ENCODE measurements at regions of chr5 and their contacts with region 1.

Region 1: GRCh38 chr5:147935032-147935431 is 28.7 kb upstream of the C5orf46 start:
- DNase-seq: no peak
- ATAC-seq: peak in 6 of 8 donors; percentile 55 to 75 (median 66)
- H3K4me3 ChIP-seq: no peak overlapping the region
- H3K27ac ChIP-seq: no peak overlapping the region
- H3K4me1 ChIP-seq: peaks cover 0 to 5% (median 0%) of the 10 kb centered on the region in 9 donors
- H3K27me3 ChIP-seq: no peaks in the 10 kb centered on the region
- CTCF ChIP-seq: peak in 8 of 9 donors; percentile 23 to 67 (median 50)

Region 2: DNA sequence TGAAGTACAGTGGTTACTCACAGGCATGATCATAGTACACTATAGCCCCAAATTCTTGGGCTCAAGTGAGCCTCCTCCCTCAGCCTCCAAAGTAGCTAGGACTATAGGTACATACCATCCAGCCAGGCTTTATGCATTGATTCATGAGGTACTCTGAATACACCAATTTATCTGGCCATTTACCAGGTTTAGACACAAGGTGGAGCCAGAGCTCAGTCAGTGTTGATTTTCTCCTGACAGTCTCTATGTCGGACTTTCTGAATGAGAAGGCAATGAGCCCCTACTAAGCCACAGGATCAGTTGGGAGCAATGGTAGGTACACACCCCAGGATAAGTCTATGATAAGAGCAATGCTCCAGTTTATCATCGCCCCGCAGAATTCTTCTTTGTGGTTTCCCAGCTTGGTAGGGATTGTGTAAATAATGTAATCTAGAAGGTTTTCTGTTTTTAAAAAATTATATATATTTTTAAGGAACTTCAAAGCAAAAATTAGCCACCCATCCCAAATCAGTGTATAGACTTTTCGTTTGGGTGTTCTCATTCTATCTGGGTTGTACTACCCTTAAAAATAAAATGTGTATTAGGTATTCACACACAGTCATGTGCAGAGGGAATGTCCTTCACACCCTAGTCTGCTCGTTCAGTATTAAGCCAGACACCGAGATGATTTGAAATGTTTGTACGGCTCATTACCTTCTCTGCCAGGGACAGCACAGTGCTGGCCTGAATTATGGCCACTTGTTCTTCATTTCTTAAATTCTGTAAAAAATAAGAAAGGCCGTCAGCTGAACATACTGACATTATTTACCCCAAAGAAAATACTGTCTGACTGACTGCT is 306.8 kb before region 1 on chr5:
- intact Hi-C with region 1: loop called in 2 of 10 experiments (anchors 10 kb)
- DNase-seq: peak in 1 of 2 donors; percentile 62
- ATAC-seq: peak; percentile 47 to 87 (median 63)
- H3K4me3 ChIP-seq: no peak overlapping the region
- H3K27ac ChIP-seq: no peak overlapping the region
- H3K4me1 ChIP-seq: no peaks in the 10 kb centered on the region
- H3K27me3 ChIP-seq: peaks cover 0 to 14% (median 0%) of the 10 kb centered on the region in 7 donors
- CTCF ChIP-seq: peak; percentile 50 to 82 (median 74)

Region 3: DNA sequence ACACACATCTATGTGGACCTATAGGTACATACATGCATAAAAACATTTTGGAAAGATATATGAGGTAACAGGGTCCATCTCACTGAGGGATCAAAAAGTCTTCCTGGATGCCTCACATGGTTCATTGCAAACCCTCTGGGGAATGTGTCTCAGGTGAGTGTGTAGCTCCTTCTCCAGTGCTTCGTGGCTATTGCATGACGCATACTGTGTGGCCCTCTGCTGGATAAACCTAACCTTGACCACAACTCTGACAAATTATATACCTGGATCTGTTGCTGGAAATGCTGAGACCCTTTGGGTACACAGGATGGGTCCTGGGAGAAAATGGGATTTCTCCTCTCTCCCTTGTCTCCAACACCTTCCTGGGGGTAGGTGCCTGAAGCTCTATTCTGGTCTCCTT is 244.4 kb before region 1 on chr5:
- intact Hi-C with region 1: no loop called
- DNase-seq: no peak
- ATAC-seq: no peak
- H3K4me3 ChIP-seq: no peak overlapping the region
- H3K27ac ChIP-seq: no peak overlapping the region
- H3K4me1 ChIP-seq: peaks cover 0 to 5% (median 0%) of the 10 kb centered on the region in 9 donors
- H3K27me3 ChIP-seq: peaks cover 0 to 4% (median 0%) of the 10 kb centered on the region in 7 donors
- CTCF ChIP-seq: peak in 3 of 9 donors; percentile 8 to 10 (median 10)

Region 4: GRCh38 chr5:147857302-147858129 is 77.5 kb before region 1 on chr5:
- intact Hi-C with region 1: loop called in 8 of 10 experiments (anchors 1 to 5 kb)
- DNase-seq: peak in 1 of 2 donors; percentile 42
- ATAC-seq: peak in 3 of 8 donors; percentile 46 to 51 (median 46)
- H3K4me3 ChIP-seq: no peak overlapping the region
- H3K27ac ChIP-seq: no peak overlapping the region
- H3K4me1 ChIP-seq: no peaks in the 10 kb centered on the region
- H3K27me3 ChIP-seq: no peaks in the 10 kb centered on the region
- CTCF ChIP-seq: peak; percentile 67 to 90 (median 82)

Region 5: DNA sequence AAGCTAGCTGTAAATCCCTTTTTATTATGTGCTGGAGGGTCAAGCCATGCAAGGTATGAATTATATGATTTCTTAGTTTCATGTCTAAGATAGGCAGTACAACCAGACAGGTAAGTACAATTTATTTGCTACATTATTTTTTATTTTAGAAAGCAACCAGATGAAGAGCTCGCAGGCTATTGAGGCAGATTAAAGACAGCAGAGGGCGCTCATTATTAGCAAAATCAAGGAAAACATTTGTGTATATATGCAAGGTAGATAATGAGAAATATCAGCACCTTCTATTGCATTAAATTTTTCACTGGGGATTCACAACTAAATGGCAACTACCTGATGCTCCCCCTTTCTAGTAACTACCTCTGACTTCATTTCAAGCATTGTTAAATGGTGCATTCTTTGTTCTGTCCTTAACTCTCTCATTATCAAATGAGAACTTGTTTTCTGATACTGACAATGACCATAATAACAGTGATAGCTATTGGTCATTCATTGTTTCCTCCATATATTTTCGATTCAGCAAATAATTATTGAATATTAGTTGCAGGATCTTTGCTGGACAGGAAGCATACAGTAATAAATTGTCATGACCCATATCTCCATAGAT is 47.9 kb before region 1 on chr5:
- intact Hi-C with region 1: loop called in 7 of 10 experiments (anchors 1 to 10 kb)
- DNase-seq: no peak
- ATAC-seq: no peak
- H3K4me3 ChIP-seq: no peak overlapping the region
- H3K27ac ChIP-seq: no peak overlapping the region
- H3K4me1 ChIP-seq: peaks cover 0 to 10% (median 2%) of the 10 kb centered on the region in 9 donors
- H3K27me3 ChIP-seq: no peaks in the 10 kb centered on the region
- CTCF ChIP-seq: peak; percentile 8 to 69 (median 59)

Region 6: DNA sequence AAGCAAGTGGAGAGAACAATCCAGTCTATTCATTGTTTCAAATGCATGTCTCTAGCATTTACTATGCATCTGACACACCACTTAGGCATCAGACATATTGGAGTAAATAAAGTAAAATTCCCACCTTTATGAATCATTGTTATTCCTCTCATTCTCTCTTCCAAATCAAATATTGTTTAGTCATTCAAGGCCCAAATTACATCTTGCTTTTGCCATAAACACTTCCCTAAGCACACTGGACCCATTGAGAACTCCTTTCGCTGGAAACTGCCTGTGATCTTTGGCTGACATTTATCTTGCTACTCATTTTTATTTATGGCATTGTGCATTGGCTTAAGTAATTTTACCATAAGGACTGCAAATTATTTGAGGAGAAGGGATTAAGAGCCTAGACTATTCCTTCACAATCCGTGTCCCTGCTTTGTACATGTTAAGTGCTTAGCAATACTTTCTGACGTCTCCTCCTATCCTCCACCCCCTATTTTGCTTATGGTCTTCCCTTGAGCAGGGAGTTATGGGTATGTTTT is 36.1 kb before region 1 on chr5:
- intact Hi-C with region 1: loop called in 1 of 10 experiments (anchors 5 kb)
- DNase-seq: no peak
- ATAC-seq: no peak
- H3K4me3 ChIP-seq: no peak overlapping the region
- H3K27ac ChIP-seq: no peak overlapping the region
- H3K4me1 ChIP-seq: peaks cover 0 to 5% (median 0%) of the 10 kb centered on the region in 9 donors
- H3K27me3 ChIP-seq: no peaks in the 10 kb centered on the region
- CTCF ChIP-seq: no peak